Cardiac septum (tissue), 1 donor: ENCODE measurements at regions of chr4 and their contacts with region 1.

Region 1: DNA sequence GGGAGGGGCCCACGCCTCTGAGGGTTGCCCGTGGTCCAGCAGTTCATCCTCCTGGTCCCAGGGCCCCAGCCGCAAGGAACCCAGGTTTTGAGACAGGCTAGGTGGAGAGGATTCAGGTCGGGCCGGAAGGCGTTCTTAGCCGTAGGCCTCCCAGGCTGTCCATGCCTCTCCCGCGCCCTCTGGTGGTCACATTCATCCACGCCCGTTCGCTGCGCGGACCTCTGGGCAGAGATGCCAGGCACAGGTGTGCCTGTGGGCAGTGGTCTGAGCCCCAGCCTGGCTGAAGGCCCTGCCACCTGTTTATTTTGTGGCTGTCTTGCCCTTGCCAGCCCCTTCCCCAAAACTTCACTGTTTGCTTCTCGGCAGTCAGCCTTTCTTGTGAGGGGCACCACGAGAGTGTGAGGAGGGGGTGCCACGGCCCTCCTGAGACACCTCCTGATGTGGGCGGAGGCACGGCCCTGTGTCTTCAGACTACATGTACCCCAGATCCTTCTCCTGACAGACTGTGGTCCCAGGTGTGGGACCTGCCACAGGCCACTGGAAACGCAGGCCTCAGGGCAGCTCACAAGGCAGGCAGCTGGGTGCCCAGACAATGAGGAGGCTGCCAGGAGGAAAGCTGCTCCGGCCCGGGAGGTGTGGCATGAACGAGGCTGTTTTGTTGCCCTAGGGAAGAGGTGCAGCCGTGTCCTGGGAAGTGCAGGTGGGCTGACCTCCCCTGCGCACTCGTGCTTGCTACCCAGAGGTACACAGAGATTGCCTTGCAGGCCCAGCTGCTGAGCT is 5.0 kb downstream of the UVSSA start:
- DNase-seq: peak; percentile 94

Region 2: GRCh38 chr4:1130316-1131186 is 221.5 kb before region 1 on chr4:
- intact Hi-C with region 1: loop called (anchors 2 kb)
- DNase-seq: no peak

Region 3: GRCh38 chr4:1167247-1167949 is 184.6 kb before region 1 on chr4:
- intact Hi-C with region 1: loop called (anchors 5 kb)
- DNase-seq: peak; percentile 91

Region 4: GRCh38 chr4:1377226-1377605 is 25.2 kb after region 1 on chr4:
- intact Hi-C with region 1: no loop called
- DNase-seq: peak; percentile 63

Region 5: GRCh38 chr4:1512738-1513660 is 161.0 kb after region 1 on chr4:
- intact Hi-C with region 1: loop called (anchors 5 kb)
- DNase-seq: no peak

Region 6: DNA sequence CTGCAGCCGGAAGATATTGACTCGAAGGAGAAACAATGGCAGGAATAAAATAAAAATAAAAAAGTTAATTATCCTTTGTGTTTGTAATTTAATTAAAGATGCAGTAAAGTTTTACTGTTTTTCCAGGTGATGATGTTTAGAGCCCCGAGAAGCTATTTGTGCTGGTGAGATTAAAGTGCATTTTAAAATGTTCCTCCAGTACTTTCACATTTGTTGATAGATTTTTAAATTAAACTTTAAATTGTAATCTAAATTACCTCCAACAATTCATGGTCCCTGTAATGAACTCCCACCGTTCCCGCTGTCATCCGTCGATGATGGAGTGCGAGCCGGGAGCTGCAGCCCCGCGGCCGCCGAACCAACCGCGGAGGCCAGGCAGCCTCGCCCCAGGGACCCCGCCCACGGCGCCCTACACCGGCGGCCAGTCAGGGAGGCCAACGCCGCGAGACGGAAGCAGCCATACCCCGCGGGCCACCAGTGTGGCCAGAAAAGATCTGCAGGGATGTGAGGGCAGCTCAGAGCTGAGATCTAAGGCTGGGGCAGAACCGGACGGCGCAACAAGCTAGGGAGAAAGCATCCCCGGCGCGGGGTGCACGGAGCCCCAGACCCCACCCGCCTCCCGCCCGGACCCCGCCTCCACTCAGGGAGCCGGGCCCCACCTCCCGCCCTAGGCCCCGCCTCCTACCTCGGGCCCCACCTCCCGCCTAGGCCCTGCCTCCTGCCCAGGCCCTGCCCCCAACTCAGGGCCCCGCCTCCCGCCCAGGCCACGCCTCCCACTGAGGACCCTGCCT is 228.1 kb after region 1 on chr4:
- intact Hi-C with region 1: no loop called
- DNase-seq: peak; percentile 95

Region 7: DNA sequence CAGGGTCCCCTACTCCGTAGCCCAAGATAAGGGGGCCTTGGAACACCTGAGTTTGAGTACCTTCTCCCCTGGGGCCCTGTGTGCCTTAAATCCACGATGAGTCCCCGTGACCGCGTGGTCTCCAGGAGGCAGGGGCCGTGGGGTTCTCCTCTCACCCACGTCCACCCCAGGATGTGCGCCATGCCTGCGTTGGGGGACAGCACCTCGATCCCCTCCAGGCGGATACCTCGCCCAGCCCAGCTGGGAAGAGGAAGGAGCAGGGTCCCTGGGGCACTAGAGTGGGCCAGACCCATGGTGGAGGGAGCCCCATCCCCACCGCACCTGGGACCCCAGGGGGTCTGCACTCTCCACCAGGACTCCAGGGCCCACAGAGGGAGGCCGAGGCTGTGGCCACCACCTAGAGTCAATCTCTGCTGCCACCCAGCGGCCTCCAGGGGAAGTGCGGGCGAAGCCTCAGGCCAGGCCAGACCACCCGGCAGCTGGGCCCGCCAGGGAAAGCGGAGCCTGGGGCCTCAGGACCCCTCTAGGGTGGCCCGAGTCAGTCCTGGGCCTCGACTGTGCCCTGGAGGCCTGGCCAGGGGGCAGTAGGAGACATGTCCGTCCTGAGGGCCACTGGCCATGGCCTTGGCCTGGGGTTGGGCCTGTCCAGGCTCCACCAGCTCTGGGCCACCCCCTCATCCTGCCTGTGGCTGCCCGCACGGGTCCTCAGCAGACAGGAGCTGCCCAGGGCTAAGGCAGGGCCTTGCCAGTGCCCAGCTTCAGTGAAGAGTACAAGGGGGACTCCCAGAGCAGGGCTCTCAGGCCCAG is 277.1 kb after region 1 on chr4:
- intact Hi-C with region 1: loop called (anchors 1 kb)
- DNase-seq: peak; percentile 87

Region 8: GRCh38 chr4:1726146-1726934 is 374.3 kb after region 1 on chr4:
- intact Hi-C with region 1: loop called (anchors 5 kb)
- DNase-seq: peak; percentile 93